Dorsolateral prefrontal cortex (tissue), 120 donors: ENCODE measurements at regions of chr10 and their contacts with region 1.

Region 1: DNA sequence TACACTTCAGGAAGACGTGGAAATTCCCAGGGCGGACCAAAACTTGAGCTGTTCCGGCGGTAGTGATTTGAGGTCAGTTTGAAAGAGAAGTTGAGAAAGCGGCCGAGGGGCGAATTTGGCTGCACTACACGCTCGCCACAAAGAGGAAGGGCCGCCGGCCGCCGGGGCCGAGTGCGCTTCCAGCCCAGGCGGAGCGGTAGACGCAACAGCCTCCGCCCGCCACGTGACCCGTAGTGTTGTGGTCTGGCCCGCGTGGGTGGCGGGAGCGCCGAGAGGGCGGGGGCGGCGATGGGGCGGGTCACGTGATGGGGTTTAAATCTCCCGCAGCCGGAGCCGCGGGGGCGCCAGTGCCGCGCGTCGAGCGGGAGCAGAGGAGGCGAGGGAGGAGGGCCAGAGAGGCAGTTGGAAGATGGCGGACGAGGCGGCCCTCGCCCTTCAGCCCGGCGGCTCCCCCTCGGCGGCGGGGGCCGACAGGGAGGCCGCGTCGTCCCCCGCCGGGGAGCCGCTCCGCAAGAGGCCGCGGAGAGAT is at the start of gene SIRT1:
- DNase-seq: peak; percentile 94 to 98 (median 96)
- H3K4me3 ChIP-seq: peak within 1 kb of the TSS; percentile 63 to 94 (median 85)
- H3K27ac ChIP-seq: peak within 1 kb of the TSS; percentile 11 to 98 (median 95)
- H3K27me3 ChIP-seq: no peaks in the 10 kb centered on the region
- CTCF ChIP-seq: peak in 38 of 56 donors; percentile 6 to 68 (median 32)
- total RNA-seq, gene SIRT1: 14.8 to 41.9 (median 25.2) TPM

Region 2: GRCh38 chr10:67288688-67289410 is 595.5 kb before region 1 on chr10:
- intact Hi-C with region 1: no loop called
- DNase-seq: no peak
- H3K4me3 ChIP-seq: no peak overlapping the region
- H3K27ac ChIP-seq: no peak overlapping the region
- H3K27me3 ChIP-seq: no peaks in the 10 kb centered on the region
- CTCF ChIP-seq: no peak

Region 3: DNA sequence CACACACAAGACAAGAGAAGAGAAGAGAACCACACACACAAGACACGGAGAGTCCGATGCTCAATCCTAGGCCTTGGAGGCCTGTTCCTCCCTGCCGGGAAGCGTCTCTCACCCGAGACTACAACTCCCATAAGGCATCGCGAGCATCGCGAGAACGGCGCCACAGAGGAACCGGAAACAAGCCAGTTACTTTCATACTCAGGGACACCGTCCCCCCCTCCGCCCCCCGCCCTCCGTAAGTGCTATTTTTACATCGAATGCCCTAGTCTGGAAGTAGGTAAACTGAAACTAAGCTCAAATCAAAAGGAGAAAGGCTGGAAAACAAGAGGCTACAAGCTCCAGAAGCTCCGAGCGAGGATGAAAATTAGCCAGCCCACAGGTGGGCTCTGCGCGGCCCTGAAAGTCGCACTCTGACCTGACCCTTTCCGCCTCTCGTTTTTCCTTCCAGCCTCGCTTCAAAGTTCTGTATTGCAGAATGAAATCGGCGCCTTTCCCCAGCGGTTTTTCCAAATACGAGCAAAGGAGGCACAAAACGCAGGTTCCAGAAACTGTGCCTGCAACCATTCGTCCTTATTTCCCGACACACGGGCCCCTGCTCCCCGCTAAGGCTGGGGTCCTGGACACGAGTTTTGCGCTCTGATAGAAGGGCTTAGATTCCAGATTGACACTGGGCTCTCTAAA is 34.9 kb before region 1 on chr10:
- intact Hi-C with region 1: loop called in 1 of 2 experiments (anchors 2 kb)
- DNase-seq: peak; percentile 93 to 98 (median 96)
- H3K4me3 ChIP-seq: peak overlapping the region; percentile 58 to 98 (median 83)
- H3K27ac ChIP-seq: peak overlapping the region; percentile 61 to 99 (median 94)
- H3K27me3 ChIP-seq: no peaks in the 10 kb centered on the region
- CTCF ChIP-seq: peak in 28 of 56 donors; percentile 3 to 44 (median 22)